ENCODE measurements at regions of chr3 and their contacts with region 1.

Region 1: GRCh38 chr3:44529927-44530326 is 25.1 kb upstream of the ZKSCAN7 start:
- DNase-seq: no peak
- ATAC-seq: peak in 3 of 4 donors; percentile 43 to 55 (median 43)
- H3K4me3 ChIP-seq: no peak overlapping the region
- H3K27ac ChIP-seq: no peak overlapping the region
- H3K4me1 ChIP-seq: no peaks in the 10 kb centered on the region
- H3K27me3 ChIP-seq: no peaks in the 10 kb centered on the region
- CTCF ChIP-seq: peak in 3 of 4 donors; percentile 29 to 38 (median 35)
- POLR2A ChIP-seq: no peak

Region 2: DNA sequence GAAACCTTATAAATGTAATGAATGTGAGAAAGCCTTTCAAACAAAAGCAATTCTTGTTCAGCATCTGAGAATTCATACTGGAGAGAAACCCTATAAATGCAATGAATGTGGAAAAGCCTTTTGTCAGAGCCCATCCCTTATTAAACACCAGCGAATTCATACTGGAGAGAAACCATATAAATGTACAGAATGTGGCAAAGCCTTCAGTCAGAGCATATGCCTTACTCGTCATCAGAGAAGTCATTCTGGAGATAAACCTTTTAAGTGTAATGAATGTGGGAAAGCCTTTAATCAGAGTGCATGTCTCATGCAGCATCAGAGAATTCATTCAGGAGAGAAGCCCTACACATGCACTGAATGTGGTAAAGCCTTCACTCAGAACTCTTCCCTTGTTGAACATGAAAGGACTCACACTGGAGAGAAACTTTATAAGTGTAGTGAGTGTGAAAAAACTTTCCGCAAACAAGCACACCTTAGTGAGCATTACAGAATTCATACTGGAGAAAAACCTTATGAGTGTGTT is 204.8 kb after region 1 on chr3:
- intact Hi-C with region 1: no loop called
- DNase-seq: no peak
- ATAC-seq: no peak
- H3K4me3 ChIP-seq: no peak overlapping the region
- H3K27ac ChIP-seq: no peak overlapping the region
- H3K4me1 ChIP-seq: no peaks in the 10 kb centered on the region
- H3K27me3 ChIP-seq: no peaks in the 10 kb centered on the region
- CTCF ChIP-seq: no peak
- POLR2A ChIP-seq: no peak

Region 3: GRCh38 chr3:44906997-44907396 is 377.1 kb after region 1 on chr3:
- intact Hi-C with region 1: loop called (anchors 5 kb)
- DNase-seq: no peak
- ATAC-seq: no peak
- H3K4me3 ChIP-seq: no peak overlapping the region
- H3K27ac ChIP-seq: no peak overlapping the region
- H3K4me1 ChIP-seq: no peaks in the 10 kb centered on the region
- H3K27me3 ChIP-seq: no peaks in the 10 kb centered on the region
- CTCF ChIP-seq: no peak
- POLR2A ChIP-seq: no peak

Region 4: DNA sequence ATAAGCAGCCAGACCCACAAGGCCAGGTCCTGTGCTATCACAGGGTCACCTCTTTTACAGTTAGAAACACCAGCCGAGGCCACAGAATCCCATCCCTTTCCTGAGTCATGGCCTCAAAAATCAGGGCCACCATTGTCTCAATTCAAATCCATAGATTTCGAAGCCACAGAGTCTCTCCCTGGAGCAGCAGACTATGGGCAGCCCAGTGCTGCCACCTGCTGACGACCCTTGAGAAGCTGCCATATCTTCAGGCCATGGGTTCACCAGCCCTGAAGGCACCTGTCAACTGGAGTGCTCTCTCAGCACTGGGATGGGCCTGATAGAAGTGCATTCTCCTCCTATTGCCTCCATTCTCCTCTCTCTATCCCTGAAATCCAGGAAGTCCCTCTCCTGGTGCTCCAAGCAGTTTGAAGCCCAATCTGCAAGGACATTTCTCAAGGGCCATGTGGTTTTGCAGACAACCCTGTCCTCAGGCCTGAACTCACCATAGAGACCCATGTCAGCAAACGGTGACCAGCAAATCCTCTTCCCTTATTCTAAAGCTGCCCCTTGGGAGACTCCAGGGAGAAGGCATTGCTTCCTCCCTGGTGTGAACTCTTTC is 384.0 kb after region 1 on chr3:
- intact Hi-C with region 1: loop called (anchors 5 kb)
- DNase-seq: peak; percentile 65 to 74 (median 74)
- ATAC-seq: peak; percentile 84 to 94 (median 90)
- H3K4me3 ChIP-seq: no peak overlapping the region
- H3K27ac ChIP-seq: no peak overlapping the region
- H3K4me1 ChIP-seq: no peaks in the 10 kb centered on the region
- H3K27me3 ChIP-seq: no peaks in the 10 kb centered on the region
- CTCF ChIP-seq: peak; percentile 69 to 86 (median 84)
- POLR2A ChIP-seq: no peak

Measured in right lobe of liver (tissue), 6 donors.